ENCODE measurements at regions of chr7 and their contacts with region 1.

Region 1: DNA sequence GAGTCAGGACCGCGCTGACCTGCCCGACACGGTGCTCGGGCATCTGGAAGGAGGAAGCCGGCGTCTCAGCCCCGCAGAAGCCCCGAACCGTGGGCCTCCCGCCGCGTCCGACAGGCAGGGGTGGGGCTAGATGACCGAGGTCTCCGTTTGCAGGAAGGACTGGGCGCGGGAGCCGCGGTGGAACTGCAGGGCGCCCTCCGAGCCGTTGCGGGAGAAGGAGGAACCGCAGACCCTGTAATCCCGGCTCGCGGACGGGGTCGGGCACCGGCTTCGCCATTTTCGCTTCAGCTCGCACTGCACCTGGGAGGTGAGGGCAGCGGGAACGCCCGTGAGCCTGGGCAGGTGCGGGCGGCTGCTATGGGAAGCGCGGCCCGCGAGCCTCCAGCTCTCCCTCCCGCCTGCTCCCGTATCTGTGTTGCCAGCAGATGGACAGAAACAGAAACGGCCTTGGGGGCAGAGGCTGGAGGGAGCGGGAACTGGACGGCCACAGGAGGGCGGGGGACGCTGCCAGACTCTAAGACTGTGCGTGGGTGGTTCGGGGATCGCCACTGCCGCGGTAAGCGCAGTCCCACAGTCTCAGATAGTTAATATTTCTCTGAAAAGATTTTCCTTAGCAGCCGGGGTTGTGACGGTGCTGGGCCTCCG is 114.1 kb downstream of the VIPR2 start:
- DNase-seq: no peak
- ATAC-seq: peak; percentile 81
- H3K4me3 ChIP-seq: peak overlapping the region; percentile 44 to 46
- H3K27ac ChIP-seq: peak overlapping the region; percentile 65; the same call in 1 of the 2 replicates
- H3K4me1 ChIP-seq: no peaks in the 10 kb centered on the region; the same call in 1 of the 2 replicates
- H3K27me3 ChIP-seq: no peaks in the 10 kb centered on the region
- CTCF ChIP-seq: no peak

Region 2: GRCh38 chr7:158863611-158864506 is 166.8 kb before region 1 on chr7:
- CTCF ChIA-PET with region 1: no interaction called
- POLR2A ChIA-PET with region 1: interaction called, 17 read pairs
- in situ Hi-C with region 1: no loop called
- intact Hi-C with region 1: no loop called
- DNase-seq: no peak
- ATAC-seq: peak; percentile 83
- H3K4me3 ChIP-seq: peak overlapping the region; percentile 44 to 64
- H3K27ac ChIP-seq: peak overlapping the region; percentile 88
- H3K4me1 ChIP-seq: peaks cover 39% of the 10 kb centered on the region
- H3K27me3 ChIP-seq: no peaks in the 10 kb centered on the region
- CTCF ChIP-seq: no peak

Region 3: GRCh38 chr7:159117366-159118196 is 87.0 kb after region 1 on chr7:
- CTCF ChIA-PET with region 1: no interaction called
- POLR2A ChIA-PET with region 1: interaction called, 13 read pairs
- in situ Hi-C with region 1: no loop called
- intact Hi-C with region 1: no loop called
- DNase-seq: no peak
- ATAC-seq: no peak
- H3K4me3 ChIP-seq: no peak overlapping the region
- H3K27ac ChIP-seq: no peak overlapping the region
- H3K4me1 ChIP-seq: no peaks in the 10 kb centered on the region
- H3K27me3 ChIP-seq: peaks cover 16% of the 10 kb centered on the region
- CTCF ChIP-seq: no peak